ENCODE measurements at regions of chr15 and their contacts with region 1.

Region 1: GRCh38 chr15:65630760-65631159 is 9.0 kb downstream of the SLC24A1 start:
- DNase-seq: no peak
- ATAC-seq: peak; percentile 89
- H3K4me3 ChIP-seq: peak overlapping the region; percentile 9; the same call in 1 of the 2 replicates
- H3K27ac ChIP-seq: no peak overlapping the region
- H3K4me1 ChIP-seq: peaks cover 16% of the 10 kb centered on the region
- H3K27me3 ChIP-seq: no peaks in the 10 kb centered on the region
- CTCF ChIP-seq: no peak
- EP300 ChIP-seq: 0 out of 4 replicates have a peak, but pooled peaks have one; percentile 16 to 32
- POLR2A ChIP-seq: no peak
- RAD21 ChIP-seq: no peak

Region 2: GRCh38 chr15:65610871-65611718 is 19.7 kb before region 1 on chr15 and contains the start of gene INTS14:
- CTCF ChIA-PET with region 1: interaction called, 15 read pairs
- POLR2A ChIA-PET with region 1: no interaction called
- RAD21 ChIA-PET with region 1: interaction called, 4 read pairs
- SMC1A ChIA-PET with region 1: interaction called, 7 read pairs
- in situ Hi-C with region 1: no loop called
- intact Hi-C with region 1: no loop called
- DNase-seq: peak; percentile 67
- ATAC-seq: peak; percentile 99
- H3K4me3 ChIP-seq: peak within 1 kb of the TSS; percentile 88
- H3K27ac ChIP-seq: peak within 1 kb of the TSS; percentile 76
- H3K4me1 ChIP-seq: peaks cover 7% of the 10 kb centered on the region
- H3K27me3 ChIP-seq: no peaks in the 10 kb centered on the region
- CTCF ChIP-seq: peak; percentile 63 to 92 (median 67)
- EP300 ChIP-seq: peak in 1 of 2 experiments; percentile 27; a peak in 1 of 4 replicates
- POLR2A ChIP-seq: peak; percentile 88
- RAD21 ChIP-seq: peak; percentile 41; the same call in 1 of the 2 replicates
- polyA plus RNA-seq, gene INTS14: 39.4 to 41.9 TPM

Region 3: DNA sequence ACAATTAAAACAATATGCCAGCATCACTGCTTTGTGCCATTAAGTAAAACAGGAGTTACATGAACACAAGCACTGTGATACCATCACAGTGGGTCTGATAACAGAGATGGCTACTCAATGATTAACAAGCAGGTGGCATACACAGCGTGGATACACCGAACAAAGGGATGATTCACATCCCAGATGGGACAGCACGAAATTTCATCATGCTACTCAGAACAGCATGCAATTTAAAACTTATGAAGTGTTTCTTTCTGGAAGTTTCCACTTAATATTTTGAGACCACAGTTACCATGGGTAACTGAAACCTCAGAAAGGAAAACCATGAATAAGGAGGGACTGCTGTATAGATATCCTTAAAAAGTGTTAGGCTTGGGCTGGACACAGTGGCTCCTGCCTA is 35.5 kb after region 1 on chr15:
- CTCF ChIA-PET with region 1: no interaction called
- POLR2A ChIA-PET with region 1: no interaction called
- RAD21 ChIA-PET with region 1: no interaction called
- SMC1A ChIA-PET with region 1: no interaction called
- in situ Hi-C with region 1: no loop called
- intact Hi-C with region 1: no loop called
- DNase-seq: no peak
- ATAC-seq: no peak
- H3K4me3 ChIP-seq: no peak overlapping the region
- H3K27ac ChIP-seq: no peak overlapping the region
- H3K4me1 ChIP-seq: peaks cover 7% of the 10 kb centered on the region; the same call in 1 of the 2 replicates
- H3K27me3 ChIP-seq: no peaks in the 10 kb centered on the region
- CTCF ChIP-seq: no peak
- EP300 ChIP-seq: no peak
- POLR2A ChIP-seq: no peak
- RAD21 ChIP-seq: no peak

Region 4: GRCh38 chr15:65856821-65857455 is 226.2 kb after region 1 on chr15:
- CTCF ChIA-PET with region 1: interaction called, 17 read pairs
- POLR2A ChIA-PET with region 1: no interaction called
- RAD21 ChIA-PET with region 1: no interaction called
- SMC1A ChIA-PET with region 1: no interaction called
- in situ Hi-C with region 1: loop called (anchors 5 kb)
- intact Hi-C with region 1: loop called (anchors 5 kb)
- DNase-seq: no peak
- ATAC-seq: peak; percentile 89
- H3K4me3 ChIP-seq: no peak overlapping the region
- H3K27ac ChIP-seq: no peak overlapping the region
- H3K4me1 ChIP-seq: peaks cover 19% of the 10 kb centered on the region
- H3K27me3 ChIP-seq: no peaks in the 10 kb centered on the region
- CTCF ChIP-seq: peak; percentile 74 to 91 (median 88)
- EP300 ChIP-seq: no peak
- POLR2A ChIP-seq: no peak
- RAD21 ChIP-seq: peak; percentile 51

Measured in GM12878 (cell line).